GM12878 (cell line): ENCODE measurements at regions of chr13 and their contacts with region 1.

Region 1: GRCh38 chr13:75365724-75366173 is 116.2 kb downstream of the TBC1D4 start:
- DNase-seq: peak; percentile 78
- ATAC-seq: peak; percentile 97
- H3K4me3 ChIP-seq: peak overlapping the region; percentile 34
- H3K27ac ChIP-seq: peak overlapping the region; percentile 81
- H3K4me1 ChIP-seq: peaks cover 13% of the 10 kb centered on the region; the same call in 1 of the 2 replicates
- H3K27me3 ChIP-seq: no peaks in the 10 kb centered on the region
- CTCF ChIP-seq: no peak
- EP300 ChIP-seq: peak; percentile 83 to 86; a peak in 3 of 4 replicates
- POLR2A ChIP-seq: no peak
- RAD21 ChIP-seq: no peak

Region 2: DNA sequence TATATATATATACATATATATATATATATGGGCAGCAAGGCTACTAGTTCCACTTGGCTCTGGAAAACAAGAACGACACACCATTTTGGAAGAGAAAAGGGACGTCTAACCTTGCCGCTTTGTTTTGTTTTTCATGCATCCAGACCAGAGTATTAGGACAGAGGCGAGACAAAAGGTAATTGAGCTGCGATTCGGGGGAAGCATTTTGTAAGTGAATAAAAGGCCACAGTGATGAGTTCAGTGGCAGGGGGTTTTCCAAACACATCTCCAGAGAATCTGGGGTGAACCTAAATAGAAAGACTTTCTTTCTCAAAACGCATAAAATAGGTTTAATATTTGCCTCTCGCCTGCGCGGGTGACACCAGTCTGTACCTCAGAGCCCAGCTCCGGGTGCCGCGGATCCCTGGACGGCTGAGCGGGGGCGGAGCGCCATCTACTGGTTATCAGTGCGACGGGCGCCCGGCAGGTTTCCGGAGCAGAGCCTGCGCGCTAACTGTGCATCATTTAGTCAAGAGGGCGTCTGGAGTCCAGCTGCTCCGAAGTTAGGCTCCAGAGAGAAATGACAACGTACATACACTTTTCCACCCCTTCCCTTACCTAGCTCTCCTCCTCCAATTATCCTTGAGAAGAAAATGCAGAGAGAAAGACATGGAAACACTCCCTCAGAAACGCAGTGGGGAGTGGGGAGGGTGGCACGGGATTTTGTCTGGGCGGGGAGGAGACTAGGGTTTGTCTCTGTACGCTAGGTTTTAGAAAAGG is 146.1 kb before region 1 on chr13:
- CTCF ChIA-PET with region 1: interaction called, 7 read pairs
- POLR2A ChIA-PET with region 1: no interaction called
- RAD21 ChIA-PET with region 1: interaction called, 14 read pairs
- SMC1A ChIA-PET with region 1: interaction called, 6 read pairs
- in situ Hi-C with region 1: no loop called
- intact Hi-C with region 1: no loop called
- DNase-seq: peak; percentile 7
- ATAC-seq: peak; percentile 99
- H3K4me3 ChIP-seq: no peak overlapping the region
- H3K27ac ChIP-seq: no peak overlapping the region
- H3K4me1 ChIP-seq: no peaks in the 10 kb centered on the region
- H3K27me3 ChIP-seq: no peaks in the 10 kb centered on the region; a peak in 1 of 4 replicates
- CTCF ChIP-seq: peak; percentile 93 to 98 (median 96); a peak in 5 of 6 replicates
- EP300 ChIP-seq: no peak
- POLR2A ChIP-seq: no peak
- RAD21 ChIP-seq: peak; percentile 99

Region 3: DNA sequence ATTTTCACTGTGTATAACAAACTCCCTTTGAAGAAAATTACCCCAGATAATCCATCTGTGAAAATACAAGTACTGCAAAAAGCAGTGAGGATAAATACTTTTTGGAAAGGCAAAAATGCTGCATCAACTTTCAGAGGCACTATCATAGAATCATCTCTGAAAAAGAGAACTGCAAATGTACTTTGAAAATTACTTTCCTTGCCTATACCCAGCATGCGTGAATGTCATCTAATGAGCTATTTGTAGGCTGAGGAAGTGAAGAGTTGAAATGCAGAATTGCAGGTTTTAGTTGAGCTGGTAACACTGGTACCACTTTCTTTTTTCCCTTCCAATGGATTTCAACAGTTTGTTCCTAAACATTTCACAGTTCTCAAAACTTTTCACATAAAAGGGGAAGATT is 80.4 kb before region 1 on chr13:
- CTCF ChIA-PET with region 1: interaction called, 3 read pairs
- POLR2A ChIA-PET with region 1: no interaction called
- RAD21 ChIA-PET with region 1: interaction called, 10 read pairs
- SMC1A ChIA-PET with region 1: interaction called, 3 read pairs
- in situ Hi-C with region 1: no loop called
- intact Hi-C with region 1: no loop called
- DNase-seq: no peak
- ATAC-seq: peak; percentile 57
- H3K4me3 ChIP-seq: no peak overlapping the region
- H3K27ac ChIP-seq: no peak overlapping the region
- H3K4me1 ChIP-seq: no peaks in the 10 kb centered on the region
- H3K27me3 ChIP-seq: no peaks in the 10 kb centered on the region
- CTCF ChIP-seq: no peak
- EP300 ChIP-seq: no peak
- POLR2A ChIP-seq: no peak
- RAD21 ChIP-seq: no peak

Region 4: GRCh38 chr13:75299913-75300862 is 65.6 kb before region 1 on chr13:
- CTCF ChIA-PET with region 1: interaction called, 5 read pairs
- POLR2A ChIA-PET with region 1: interaction called, 6 read pairs
- RAD21 ChIA-PET with region 1: interaction called, 33 read pairs
- SMC1A ChIA-PET with region 1: interaction called, 9 read pairs
- in situ Hi-C with region 1: no loop called
- intact Hi-C with region 1: loop called (anchors 2 kb)
- DNase-seq: peak; percentile 67
- ATAC-seq: peak; percentile 80
- H3K4me3 ChIP-seq: no peak overlapping the region
- H3K27ac ChIP-seq: peak overlapping the region; percentile 78
- H3K4me1 ChIP-seq: peaks cover 12% of the 10 kb centered on the region
- H3K27me3 ChIP-seq: no peaks in the 10 kb centered on the region
- CTCF ChIP-seq: no peak
- EP300 ChIP-seq: peak; percentile 62 to 71; a peak in 3 of 4 replicates
- POLR2A ChIP-seq: no peak
- RAD21 ChIP-seq: no peak

Region 5: DNA sequence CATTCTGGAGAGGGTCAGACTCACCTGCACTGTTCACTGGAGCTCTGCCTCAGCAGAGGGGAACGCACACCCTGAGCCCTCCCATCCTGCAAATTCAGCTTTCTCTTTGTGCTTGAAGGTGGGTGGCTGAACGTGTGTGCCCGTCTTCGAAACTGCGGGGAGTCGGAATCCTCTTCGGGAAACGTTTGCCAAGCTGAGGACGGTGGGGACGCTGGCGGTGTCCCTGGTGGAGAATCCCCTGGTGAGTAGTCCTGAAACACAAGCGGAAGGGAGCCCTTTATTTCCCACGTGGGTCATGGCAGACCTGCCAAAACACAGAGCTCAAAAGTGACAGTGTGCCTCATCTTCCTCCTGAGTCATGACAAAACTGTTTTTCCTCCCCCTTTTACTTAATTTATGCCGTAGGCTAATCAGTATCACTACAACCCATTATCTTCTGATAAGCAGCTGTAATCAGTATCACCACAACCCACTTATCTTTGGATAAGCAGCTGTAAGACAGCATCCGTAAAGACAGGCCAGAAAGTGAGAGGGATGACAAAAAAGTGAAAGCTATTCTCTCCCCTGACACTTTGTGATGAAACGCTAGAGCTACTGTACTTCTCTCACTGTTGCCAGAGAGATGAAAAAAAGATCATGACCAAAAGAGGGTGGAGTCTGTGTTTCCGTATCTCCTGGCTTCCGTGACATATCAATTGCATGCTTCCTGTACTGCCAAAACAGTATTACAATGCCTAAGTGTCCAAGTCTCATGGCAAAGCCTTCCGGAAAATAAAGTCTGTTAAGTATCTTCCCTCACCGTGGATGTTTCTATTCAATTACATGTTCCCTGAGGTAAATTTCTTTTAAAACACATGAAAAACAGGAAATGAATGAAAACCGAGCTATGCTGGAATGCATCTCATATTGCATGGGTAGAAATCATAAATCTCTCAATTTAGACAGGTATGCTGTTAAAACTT is 39.3 kb before region 1 on chr13:
- CTCF ChIA-PET with region 1: interaction called, 3 read pairs
- POLR2A ChIA-PET with region 1: interaction called, 3 read pairs
- RAD21 ChIA-PET with region 1: interaction called, 9 read pairs
- SMC1A ChIA-PET with region 1: interaction called, 10 read pairs
- in situ Hi-C with region 1: no loop called
- intact Hi-C with region 1: no loop called
- DNase-seq: no peak
- ATAC-seq: peak; percentile 89
- H3K4me3 ChIP-seq: peak overlapping the region; percentile 34; the same call in 1 of the 2 replicates
- H3K27ac ChIP-seq: peak overlapping the region; percentile 22
- H3K4me1 ChIP-seq: peaks cover 14% of the 10 kb centered on the region
- H3K27me3 ChIP-seq: no peaks in the 10 kb centered on the region
- CTCF ChIP-seq: no peak
- EP300 ChIP-seq: no peak
- POLR2A ChIP-seq: no peak
- RAD21 ChIP-seq: no peak

Region 6: DNA sequence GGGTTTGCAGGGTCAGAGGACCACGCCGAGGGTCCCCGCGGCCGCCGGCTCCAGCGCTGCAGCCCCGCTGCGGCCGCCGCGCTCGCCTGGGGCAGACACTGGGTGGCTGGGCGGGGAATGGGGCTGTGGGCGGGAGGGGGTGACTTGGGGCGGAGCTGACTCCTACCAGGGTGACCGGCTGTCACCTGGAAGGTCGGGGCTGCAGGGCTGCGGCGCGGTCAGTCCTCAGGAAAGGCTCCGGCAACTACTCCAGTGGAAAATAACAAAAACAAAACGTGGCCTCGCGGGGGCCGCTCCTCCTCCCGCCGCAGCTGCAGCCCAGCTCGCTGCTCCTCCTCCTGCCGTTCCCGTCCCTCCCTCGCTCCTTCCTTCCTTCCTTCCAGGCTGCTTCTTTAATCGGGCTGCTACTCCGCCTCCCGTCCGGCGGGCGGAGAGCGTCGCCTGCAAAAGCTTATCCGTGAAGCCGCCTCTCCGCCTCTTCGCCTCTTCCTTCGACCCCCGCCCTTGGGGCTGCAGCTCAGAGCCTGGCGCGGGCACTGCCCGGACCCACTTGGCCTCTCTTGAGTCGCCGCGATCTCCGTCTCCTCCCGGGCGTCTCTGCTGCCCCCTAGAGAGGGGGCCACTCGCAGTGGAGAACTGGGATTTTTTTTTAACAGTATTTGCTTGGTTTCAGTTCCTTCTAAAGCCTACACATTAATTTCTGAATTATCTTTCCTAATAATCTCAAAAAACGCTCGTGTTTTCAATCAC is 116.5 kb after region 1 on chr13 and contains the start of gene TBC1D4:
- CTCF ChIA-PET with region 1: interaction called, 47 read pairs
- POLR2A ChIA-PET with region 1: no interaction called
- RAD21 ChIA-PET with region 1: interaction called, 21 read pairs
- SMC1A ChIA-PET with region 1: interaction called, 75 read pairs
- in situ Hi-C with region 1: loop called (anchors 5 kb)
- intact Hi-C with region 1: no loop called
- DNase-seq: peak; percentile 66
- ATAC-seq: peak; percentile 86
- H3K4me3 ChIP-seq: peak within 1 kb of the TSS; percentile 82
- H3K27ac ChIP-seq: peak within 1 kb of the TSS; percentile 55
- H3K4me1 ChIP-seq: peaks cover 8% of the 10 kb centered on the region
- H3K27me3 ChIP-seq: no peaks in the 10 kb centered on the region
- CTCF ChIP-seq: peak; percentile 81 to 88 (median 86)
- EP300 ChIP-seq: peak in 1 of 2 experiments; percentile 84; a peak in 2 of 4 replicates
- POLR2A ChIP-seq: peak; percentile 73
- RAD21 ChIP-seq: peak; percentile 82
- polyA plus RNA-seq, gene TBC1D4: 11.0 to 11.9 TPM